ENCODE measurements at regions of chr2 and their contacts with region 1.

Region 1: DNA sequence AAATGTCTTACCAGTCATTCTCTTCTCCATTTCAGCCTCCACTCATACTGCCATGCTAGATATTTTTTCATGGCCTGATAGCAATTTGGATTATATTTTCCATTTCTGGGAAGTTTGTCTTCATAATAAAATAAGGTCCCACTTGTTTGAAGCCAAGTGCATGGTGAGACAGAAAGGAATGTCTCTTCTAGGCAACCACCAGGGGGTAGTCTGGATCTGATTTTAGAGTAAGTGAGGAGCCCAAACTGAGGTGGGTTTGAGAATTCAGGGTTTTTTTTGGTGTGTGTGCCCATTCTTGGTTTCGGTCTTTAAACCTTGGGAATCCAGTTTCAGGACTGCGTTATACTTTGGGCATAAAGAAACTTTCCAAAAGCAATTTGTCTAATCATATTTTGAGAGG is 315.5 kb downstream of the RPRM start:
- DNase-seq: peak; percentile 31

Region 2: DNA sequence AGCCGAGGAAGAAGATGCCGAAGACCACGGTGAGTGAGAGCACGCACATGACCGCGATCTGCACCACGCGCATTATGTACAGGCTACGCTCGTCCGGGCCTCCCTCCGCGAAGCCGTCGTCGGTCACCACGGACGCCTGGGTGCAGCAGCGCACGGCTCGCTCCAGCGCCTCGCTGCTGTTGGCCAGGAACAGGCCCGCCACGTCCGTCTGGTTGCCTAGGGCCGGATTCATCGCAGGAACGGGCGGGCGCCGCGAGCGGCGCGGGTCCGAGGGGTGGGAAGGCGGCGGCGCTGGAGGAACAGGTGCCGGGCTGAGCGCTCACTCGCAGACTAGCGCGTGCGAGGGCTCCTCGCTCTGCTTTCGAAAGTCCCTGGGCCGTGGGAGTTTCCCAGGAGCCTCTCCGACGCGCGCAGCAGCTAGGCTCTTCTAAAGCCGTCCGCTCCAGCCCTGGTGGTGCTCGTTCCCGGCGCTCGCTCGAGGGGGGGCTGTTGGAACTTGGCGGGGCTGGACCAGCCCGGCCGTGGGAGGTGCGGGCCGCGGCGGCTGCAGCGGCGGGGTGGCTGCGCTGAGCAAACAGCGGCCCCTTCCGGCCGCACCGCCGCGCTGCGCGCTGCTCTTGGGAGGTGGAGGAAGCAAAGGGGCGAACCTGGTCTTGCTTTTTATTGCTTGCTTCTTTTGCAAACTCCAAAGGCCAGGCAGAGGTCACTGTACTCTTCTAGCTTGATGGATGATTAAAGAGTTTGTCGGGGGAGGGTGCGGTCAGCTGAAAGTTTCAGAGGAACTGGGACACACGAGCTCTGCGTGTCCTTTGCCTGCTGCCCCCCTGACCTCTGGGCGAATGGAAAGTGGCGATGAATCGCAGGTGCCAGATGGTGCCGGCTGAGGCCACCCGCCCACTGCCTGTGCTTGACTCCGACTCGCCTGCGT is 315.5 kb after region 1 on chr2 and contains the start of gene RPRM:
- CTCF ChIA-PET with region 1: interaction called, 10 read pairs
- POLR2A ChIA-PET with region 1: no interaction called
- DNase-seq: peak; percentile 81